Mammary epithelial cell (primary cell): ENCODE measurements at regions of chr7 and their contacts with region 1.

Region 1: GRCh38 chr7:85890244-85890811 is 703.5 kb upstream of the SEMA3D start:
- DNase-seq: peak; percentile 4
- H3K4me3 ChIP-seq: no peak overlapping the region
- H3K27ac ChIP-seq: no peak overlapping the region
- H3K4me1 ChIP-seq: no peaks in the 10 kb centered on the region
- H3K27me3 ChIP-seq: no peaks in the 10 kb centered on the region
- CTCF ChIP-seq: peak; percentile 44 to 59

Region 2: DNA sequence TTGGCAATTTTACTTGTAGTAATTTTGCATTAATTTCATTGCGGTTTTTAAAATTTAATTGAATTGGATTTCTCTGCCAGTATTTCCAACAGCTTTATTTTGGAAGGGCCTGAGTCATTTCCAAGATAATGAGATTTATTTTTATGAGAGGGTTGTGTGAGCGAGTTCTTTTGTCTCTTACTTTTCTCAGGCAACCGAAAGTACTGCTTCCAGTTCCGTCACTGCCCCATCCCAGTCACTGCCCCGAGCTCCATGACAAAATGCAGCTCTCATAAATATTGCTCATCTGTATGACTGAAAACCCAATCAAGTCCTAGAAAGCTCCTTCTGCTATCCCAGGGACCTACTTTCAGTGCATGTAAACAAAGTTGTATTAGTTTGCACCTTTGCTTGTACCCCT is 235.1 kb before region 1 on chr7:
- CTCF ChIA-PET with region 1: no interaction called
- dilution Hi-C with region 1: no loop called
- in situ Hi-C with region 1: no loop called
- intact Hi-C with region 1: no loop called
- DNase-seq: no peak
- H3K4me3 ChIP-seq: no peak overlapping the region
- H3K27ac ChIP-seq: no peak overlapping the region
- H3K4me1 ChIP-seq: no peaks in the 10 kb centered on the region
- H3K27me3 ChIP-seq: no peaks in the 10 kb centered on the region
- CTCF ChIP-seq: no peak

Region 3: DNA sequence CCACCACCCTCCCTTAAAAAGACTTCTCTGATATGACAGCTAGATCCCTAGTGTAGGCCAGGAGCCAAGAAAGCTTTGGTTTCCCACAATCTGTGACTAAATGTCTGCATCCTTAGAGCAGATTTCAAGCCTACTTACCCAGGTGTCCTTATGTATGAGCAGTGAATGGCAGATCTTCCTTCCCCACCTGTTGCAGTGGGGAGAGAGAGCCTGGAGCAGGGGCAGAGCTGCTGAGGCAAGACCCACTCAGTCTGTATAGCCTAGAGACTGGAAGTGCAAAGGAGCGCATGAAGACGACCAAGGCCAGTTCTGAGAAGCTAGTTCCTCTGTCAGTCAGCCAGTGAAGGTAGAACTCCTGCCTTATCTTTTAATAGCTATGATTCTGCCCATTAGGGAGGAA is 933.4 kb after region 1 on chr7:
- CTCF ChIA-PET with region 1: no interaction called
- dilution Hi-C with region 1: no loop called
- in situ Hi-C with region 1: no loop called
- intact Hi-C with region 1: loop called (anchors 10 kb)
- DNase-seq: no peak
- H3K4me3 ChIP-seq: no peak overlapping the region
- H3K27ac ChIP-seq: no peak overlapping the region
- H3K4me1 ChIP-seq: no peaks in the 10 kb centered on the region
- H3K27me3 ChIP-seq: no peaks in the 10 kb centered on the region
- CTCF ChIP-seq: no peak

Region 4: DNA sequence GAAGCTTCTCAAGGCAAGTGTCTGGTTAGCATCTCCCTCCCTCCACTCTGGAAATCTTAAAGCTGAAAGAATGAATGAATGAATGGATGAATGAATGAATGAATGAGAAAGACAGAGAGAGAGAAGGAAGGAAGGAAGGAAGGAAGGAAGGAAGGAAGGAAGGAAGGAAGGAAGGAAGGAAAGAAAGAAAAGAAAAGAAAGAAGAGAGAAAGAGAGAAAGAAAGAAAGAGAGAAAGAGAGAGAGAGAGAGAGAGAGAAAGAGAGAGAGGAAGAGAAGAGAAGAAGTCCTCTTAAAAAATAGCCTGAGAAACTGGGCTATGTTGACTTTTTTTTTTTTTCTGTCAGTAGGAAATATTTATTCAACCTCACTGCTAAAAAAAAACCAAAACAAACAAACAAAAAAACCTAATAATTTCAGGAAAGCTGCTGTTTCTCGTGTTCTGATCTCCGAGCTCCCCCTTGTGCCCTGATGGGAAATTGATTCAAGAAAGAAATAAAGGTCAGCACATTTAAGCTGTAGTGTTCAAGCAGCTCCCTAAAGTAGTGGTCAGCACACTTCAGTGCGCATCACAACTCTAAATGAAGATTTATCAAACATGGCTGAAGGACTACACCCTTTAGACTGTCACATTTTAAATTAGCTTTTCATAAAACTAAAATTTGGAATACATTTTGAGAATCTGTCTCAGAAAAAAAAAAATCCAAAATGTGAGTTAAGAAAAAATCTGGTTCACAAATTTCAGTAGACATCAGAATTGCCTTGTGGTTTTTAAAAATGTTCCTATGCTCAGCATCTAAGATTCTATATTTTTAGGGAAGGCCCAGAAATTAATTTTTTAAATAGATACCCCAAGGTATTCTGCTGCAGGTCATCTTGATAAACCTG is 1014.9 kb after region 1 on chr7:
- CTCF ChIA-PET with region 1: no interaction called
- dilution Hi-C with region 1: no loop called
- in situ Hi-C with region 1: no loop called
- intact Hi-C with region 1: loop called (anchors 5 kb)
- DNase-seq: peak; percentile 4
- H3K4me3 ChIP-seq: no peak overlapping the region
- H3K27ac ChIP-seq: no peak overlapping the region
- H3K4me1 ChIP-seq: no peaks in the 10 kb centered on the region
- H3K27me3 ChIP-seq: no peaks in the 10 kb centered on the region
- CTCF ChIP-seq: peak; percentile 60 to 62